ENCODE measurements at regions of chr2 and their contacts with region 1.

Region 1: GRCh38 chr2:231713730-231714430 is 5.6 kb downstream of the PTMA start:
- DNase-seq: peak; percentile 86 to 96 (median 92)
- ATAC-seq: peak; percentile 47
- H3K4me3 ChIP-seq: no peak overlapping the region
- H3K4me3 Mint-ChIP-seq: peak overlapping the region; percentile 87
- H3K27ac ChIP-seq: peak overlapping the region; percentile 49 to 57
- H3K27ac Mint-ChIP-seq: peak overlapping the region; percentile 100
- H3K4me1 ChIP-seq: peaks cover 52% of the 10 kb centered on the region
- H3K4me1 Mint-ChIP-seq: peaks cover 42% of the 10 kb centered on the region
- H3K27me3 ChIP-seq: no peaks in the 10 kb centered on the region
- H3K27me3 Mint-ChIP-seq: peaks cover 4% of the 10 kb centered on the region
- CTCF ChIP-seq: peak; percentile 97

Region 2: GRCh38 chr2:230130668-230131364 is 1583.1 kb before region 1 on chr2:
- CTCF ChIA-PET with region 1: no interaction called
- POLR2A ChIA-PET with region 1: no interaction called
- intact Hi-C with region 1: no loop called
- DNase-seq: no peak
- ATAC-seq: no peak
- H3K4me3 ChIP-seq: no peak overlapping the region
- H3K4me3 Mint-ChIP-seq: no peak overlapping the region
- H3K27ac ChIP-seq: no peak overlapping the region
- H3K27ac Mint-ChIP-seq: no peak overlapping the region
- H3K4me1 ChIP-seq: no peaks in the 10 kb centered on the region
- H3K4me1 Mint-ChIP-seq: peaks cover 5% of the 10 kb centered on the region
- H3K27me3 ChIP-seq: no peaks in the 10 kb centered on the region
- H3K27me3 Mint-ChIP-seq: no peaks in the 10 kb centered on the region
- CTCF ChIP-seq: no peak

Region 3: GRCh38 chr2:231612179-231613053 is 101.5 kb before region 1 on chr2:
- CTCF ChIA-PET with region 1: interaction called, 53 read pairs
- POLR2A ChIA-PET with region 1: interaction called, 87 read pairs
- intact Hi-C with region 1: loop called (anchors 1 kb)
- DNase-seq: peak; percentile 79 to 93 (median 86)
- ATAC-seq: peak; percentile 78
- H3K4me3 ChIP-seq: peak overlapping the region; percentile 59
- H3K4me3 Mint-ChIP-seq: peak overlapping the region; percentile 90
- H3K27ac ChIP-seq: no peak overlapping the region
- H3K27ac Mint-ChIP-seq: peak overlapping the region; percentile 74
- H3K4me1 ChIP-seq: peaks cover 34% of the 10 kb centered on the region
- H3K4me1 Mint-ChIP-seq: peaks cover 47% of the 10 kb centered on the region
- H3K27me3 ChIP-seq: no peaks in the 10 kb centered on the region
- H3K27me3 Mint-ChIP-seq: no peaks in the 10 kb centered on the region
- CTCF ChIP-seq: peak; percentile 89

Region 4: DNA sequence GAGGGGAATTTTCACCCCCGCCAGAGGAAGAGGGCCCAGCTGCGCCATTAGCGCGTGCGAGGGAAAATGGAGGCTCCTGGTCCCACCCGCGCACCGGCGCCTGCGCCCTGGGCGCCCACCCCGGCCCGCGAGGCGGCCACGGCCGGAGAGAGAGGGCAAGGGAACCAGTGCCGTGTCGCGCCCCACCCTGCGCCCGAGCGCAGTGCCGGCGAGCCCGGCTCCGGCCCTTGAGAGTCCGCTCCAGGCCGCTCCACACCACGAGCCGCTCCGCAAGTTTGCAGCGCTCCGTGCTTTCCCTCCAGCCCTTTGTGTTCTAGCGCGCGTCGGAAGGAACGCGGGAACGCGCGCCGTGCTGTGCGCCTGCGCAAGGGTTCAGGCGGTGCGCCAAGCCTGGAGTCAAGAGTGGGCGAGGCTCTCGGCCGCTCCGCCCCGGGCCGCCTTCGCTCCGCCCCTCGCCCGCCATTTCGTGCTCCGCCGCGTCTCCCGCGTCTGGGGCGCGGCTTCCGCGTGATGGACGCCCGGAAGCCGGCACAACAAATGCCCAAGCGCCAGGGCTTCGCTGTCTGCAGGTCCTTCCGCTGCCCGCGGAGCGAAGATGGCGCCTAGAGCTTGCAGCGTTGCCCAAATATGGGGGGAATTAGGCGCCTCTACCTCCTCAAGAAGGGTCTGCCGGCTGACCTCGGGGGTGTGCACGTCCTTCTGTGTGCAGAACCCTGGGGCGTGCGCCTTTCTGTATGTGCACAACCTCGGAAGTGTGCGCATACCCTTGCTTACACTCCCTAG is 51.7 kb before region 1 on chr2:
- CTCF ChIA-PET with region 1: interaction called, 11 read pairs
- POLR2A ChIA-PET with region 1: interaction called, 245 read pairs
- intact Hi-C with region 1: no loop called
- DNase-seq: peak; percentile 92 to 99 (median 97)
- ATAC-seq: peak; percentile 89
- H3K4me3 ChIP-seq: peak overlapping the region; percentile 57
- H3K4me3 Mint-ChIP-seq: peak overlapping the region; percentile 73
- H3K27ac ChIP-seq: peak overlapping the region; percentile 80 to 96
- H3K27ac Mint-ChIP-seq: peak overlapping the region; percentile 94
- H3K4me1 ChIP-seq: peaks cover 35% of the 10 kb centered on the region
- H3K4me1 Mint-ChIP-seq: peaks cover 17% of the 10 kb centered on the region
- H3K27me3 ChIP-seq: no peaks in the 10 kb centered on the region
- H3K27me3 Mint-ChIP-seq: no peaks in the 10 kb centered on the region
- CTCF ChIP-seq: no peak

Region 5: GRCh38 chr2:231680992-231681853 is 32.7 kb before region 1 on chr2:
- CTCF ChIA-PET with region 1: interaction called, 122 read pairs
- POLR2A ChIA-PET with region 1: interaction called, 62 read pairs
- intact Hi-C with region 1: loop called (anchors 1 kb)
- DNase-seq: no peak
- ATAC-seq: no peak
- H3K4me3 ChIP-seq: no peak overlapping the region
- H3K4me3 Mint-ChIP-seq: peak overlapping the region; percentile 62
- H3K27ac ChIP-seq: no peak overlapping the region
- H3K27ac Mint-ChIP-seq: no peak overlapping the region
- H3K4me1 ChIP-seq: peaks cover 9% of the 10 kb centered on the region
- H3K4me1 Mint-ChIP-seq: peaks cover 5% of the 10 kb centered on the region
- H3K27me3 ChIP-seq: peaks cover 13 to 14% of the 10 kb centered on the region in 2 experiments
- H3K27me3 Mint-ChIP-seq: peaks cover 22% of the 10 kb centered on the region
- CTCF ChIP-seq: no peak

Region 6: DNA sequence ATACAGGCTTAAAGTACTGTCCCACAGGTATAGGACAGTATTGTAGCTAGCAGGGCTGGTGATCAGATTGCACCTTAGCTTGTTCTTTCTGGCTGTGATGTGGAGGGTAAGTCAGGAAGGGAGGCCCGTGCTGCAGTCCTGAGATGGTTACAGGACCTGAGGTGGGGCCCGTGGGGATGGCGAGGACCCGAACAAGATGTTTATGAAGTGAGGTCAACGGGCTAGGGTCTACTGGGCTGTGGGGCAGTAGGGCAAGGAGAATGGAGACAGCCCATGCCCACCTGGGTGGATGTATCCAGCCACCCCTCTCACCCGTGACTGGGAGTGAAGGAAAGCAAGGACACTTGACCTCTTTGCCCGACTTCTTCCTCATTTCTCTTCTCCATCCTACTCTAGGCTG is 12.3 kb after region 1 on chr2:
- CTCF ChIA-PET with region 1: interaction called, 14 read pairs
- POLR2A ChIA-PET with region 1: interaction called, 4 read pairs
- intact Hi-C with region 1: no loop called
- DNase-seq: no peak
- ATAC-seq: no peak
- H3K4me3 ChIP-seq: no peak overlapping the region
- H3K4me3 Mint-ChIP-seq: no peak overlapping the region
- H3K27ac ChIP-seq: no peak overlapping the region
- H3K27ac Mint-ChIP-seq: no peak overlapping the region
- H3K4me1 ChIP-seq: no peaks in the 10 kb centered on the region
- H3K4me1 Mint-ChIP-seq: no peaks in the 10 kb centered on the region
- H3K27me3 ChIP-seq: no peaks in the 10 kb centered on the region
- H3K27me3 Mint-ChIP-seq: no peaks in the 10 kb centered on the region
- CTCF ChIP-seq: no peak